Heart left ventricle (tissue), 16 donors: ENCODE measurements at regions of chr1 and their contacts with region 1.

Region 1: DNA sequence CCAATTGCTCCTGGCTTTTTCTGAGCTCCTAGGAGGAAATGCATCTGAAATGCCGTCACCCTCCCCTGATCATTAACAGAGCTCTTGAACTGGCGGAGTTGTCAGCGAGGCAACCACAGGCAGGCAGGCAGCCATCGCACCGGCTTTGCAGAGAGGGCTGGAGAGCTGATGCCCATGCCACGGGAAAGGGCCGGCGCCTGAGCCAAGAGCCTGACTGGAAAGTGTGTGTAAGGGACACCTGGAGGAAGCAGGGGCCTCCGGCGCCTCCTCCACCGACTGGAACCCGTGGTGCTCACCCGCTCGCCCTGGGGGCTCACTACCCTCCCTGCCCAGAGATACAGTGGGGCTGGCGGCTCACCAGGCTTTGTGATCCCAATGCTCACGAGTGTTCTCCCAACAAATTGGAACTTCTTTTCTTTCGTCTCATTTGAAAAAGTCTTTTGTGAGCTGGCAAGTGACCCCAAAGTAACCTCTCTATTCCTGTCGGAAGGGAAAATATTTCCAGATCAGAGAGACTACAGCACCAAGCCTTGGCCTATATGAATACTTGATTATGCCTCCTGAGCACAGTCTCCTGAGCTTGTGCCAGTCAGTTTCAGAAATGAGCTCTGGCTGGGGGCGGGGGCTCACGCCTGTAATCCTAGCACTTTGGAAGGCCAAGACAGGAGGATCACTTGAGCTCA is 97.7 kb upstream of the SLC25A33 start:
- DNase-seq: peak; percentile 52 to 74 (median 68)
- ATAC-seq: peak; percentile 31 to 71 (median 59)
- H3K4me3 ChIP-seq: peak overlapping the region in 1 of 12 donors; percentile 9
- H3K27ac ChIP-seq: peak overlapping the region; percentile 66 to 88 (median 77)
- H3K4me1 ChIP-seq: peaks cover 0 to 55% (median 31%) of the 10 kb centered on the region in 12 donors
- H3K27me3 ChIP-seq: no peaks in the 10 kb centered on the region
- CTCF ChIP-seq: no peak
- POLR2A ChIP-seq: no peak

Region 2: GRCh38 chr1:9086045-9086444 is 355.5 kb before region 1 on chr1:
- intact Hi-C with region 1: no loop called
- DNase-seq: no peak
- ATAC-seq: no peak
- H3K4me3 ChIP-seq: no peak overlapping the region
- H3K27ac ChIP-seq: peak overlapping the region in 1 of 12 donors; percentile 72
- H3K4me1 ChIP-seq: peaks cover 0 to 37% (median 11%) of the 10 kb centered on the region in 12 donors
- H3K27me3 ChIP-seq: no peaks in the 10 kb centered on the region
- CTCF ChIP-seq: no peak
- POLR2A ChIP-seq: no peak

Region 3: GRCh38 chr1:9388335-9389180 is 53.0 kb before region 1 on chr1:
- intact Hi-C with region 1: loop called in 2 of 10 experiments (anchors 10 kb)
- DNase-seq: no peak
- ATAC-seq: peak in 1 of 4 donors; percentile 25
- H3K4me3 ChIP-seq: no peak overlapping the region
- H3K27ac ChIP-seq: peak overlapping the region in 1 of 12 donors; percentile 11
- H3K4me1 ChIP-seq: peaks cover 0 to 32% (median 19%) of the 10 kb centered on the region in 12 donors
- H3K27me3 ChIP-seq: no peaks in the 10 kb centered on the region
- CTCF ChIP-seq: no peak
- POLR2A ChIP-seq: no peak